ENCODE measurements at regions of chr3 and their contacts with region 1.

Region 1: DNA sequence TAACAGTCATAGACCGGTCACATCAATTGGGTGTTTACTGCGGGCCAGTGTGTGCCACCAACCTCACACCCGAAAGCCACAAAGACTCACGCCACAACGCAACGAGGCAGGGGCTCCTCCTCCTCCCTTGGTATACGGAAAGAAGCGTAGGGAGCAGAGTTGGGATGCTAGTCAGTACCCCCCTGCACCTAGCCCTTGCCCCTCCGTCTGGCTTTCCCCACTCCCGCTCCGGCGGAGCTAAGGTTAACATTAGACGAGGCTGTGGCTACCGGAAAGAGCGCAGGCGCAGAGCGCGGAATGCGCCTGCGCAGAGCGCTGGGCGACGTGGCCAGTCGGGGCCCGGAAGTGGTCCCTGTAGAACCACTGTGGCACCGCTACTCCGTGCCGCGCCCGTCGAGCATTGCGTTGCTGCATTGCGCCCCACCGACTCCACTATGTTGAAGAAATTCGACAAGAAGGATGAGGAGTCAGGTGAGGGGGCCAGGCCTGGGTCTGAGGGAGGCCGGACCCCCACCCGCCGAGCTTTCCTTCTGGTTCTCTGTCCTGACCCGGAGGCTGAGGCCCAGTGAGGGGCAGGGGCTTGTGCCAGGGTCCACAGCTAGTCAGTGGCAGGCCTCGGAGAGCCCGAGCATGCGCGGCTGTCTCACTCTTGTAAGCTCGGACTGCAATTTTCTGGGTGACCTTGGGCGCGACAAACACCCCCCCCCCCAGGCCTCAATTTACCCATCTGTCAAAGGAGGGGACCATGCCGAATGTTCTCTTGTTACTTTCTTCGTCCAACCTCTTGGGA is at the start of gene COPG1:
- DNase-seq: peak; percentile 92
- H3K4me3 ChIP-seq: peak within 1 kb of the TSS; percentile 92
- H3K27ac ChIP-seq: peak within 1 kb of the TSS; percentile 59
- H3K4me1 ChIP-seq: peaks cover 35% of the 10 kb centered on the region
- CTCF ChIP-seq: no peak
- total RNA-seq, gene COPG1: 91.9 and 135 TPM in 2 replicates

Region 2: DNA sequence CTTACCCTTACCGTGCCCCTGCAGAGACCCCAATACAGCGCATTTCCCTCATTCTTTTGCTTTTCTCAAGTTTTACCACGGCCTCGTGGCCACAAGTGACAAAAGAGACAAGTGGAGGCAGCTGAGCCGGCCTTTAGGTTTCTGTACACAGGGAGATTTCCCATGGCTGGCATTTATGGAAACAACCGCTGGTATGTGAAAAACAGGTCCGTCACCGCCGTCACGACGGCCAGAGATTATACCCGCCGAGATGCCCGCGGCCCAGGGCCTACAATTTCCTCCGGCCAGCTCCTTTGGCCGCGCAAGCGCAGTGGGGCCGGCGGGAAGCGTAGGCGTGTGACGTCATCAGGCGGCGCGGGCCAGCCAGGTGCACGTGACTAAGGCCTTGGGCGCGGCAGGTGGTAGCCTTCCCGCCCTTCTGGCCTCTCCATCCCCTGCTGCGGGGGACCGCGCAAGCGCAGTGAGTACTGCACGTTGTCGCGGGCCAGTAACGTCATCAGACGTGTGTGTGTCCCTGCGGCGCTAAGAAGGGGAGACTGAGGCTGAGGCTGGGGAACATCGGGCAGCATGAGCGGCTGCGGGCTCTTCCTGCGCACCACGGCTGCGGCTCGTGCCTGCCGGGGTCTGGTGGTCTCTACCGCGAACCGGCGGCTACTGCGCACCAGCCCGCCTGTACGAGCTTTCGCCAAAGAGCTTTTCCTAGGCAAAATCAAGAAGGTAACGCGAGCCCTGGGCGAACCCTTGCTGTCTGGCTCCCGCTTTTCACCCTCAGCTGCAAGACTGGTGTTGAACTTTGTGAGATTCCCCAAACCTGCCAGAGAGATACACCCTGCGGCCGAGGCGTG is 370.1 kb before region 1 on chr3 and contains the start of gene ACAD9:
- CTCF ChIA-PET with region 1: no interaction called
- POLR2A ChIA-PET with region 1: interaction called, 3 read pairs
- intact Hi-C with region 1: loop called (anchors 5 kb)
- DNase-seq: peak; percentile 99
- H3K4me3 ChIP-seq: peak within 1 kb of the TSS; percentile 90
- H3K27ac ChIP-seq: peak within 1 kb of the TSS; percentile 58
- H3K4me1 ChIP-seq: peaks cover 25% of the 10 kb centered on the region
- CTCF ChIP-seq: no peak
- total RNA-seq, gene ACAD9: 88.5 and 93.7 TPM in 2 replicates

Region 3: GRCh38 chr3:129026728-129027543 is 222.5 kb before region 1 on chr3:
- CTCF ChIA-PET with region 1: interaction called, 3 read pairs
- POLR2A ChIA-PET with region 1: interaction called, 10 read pairs
- intact Hi-C with region 1: loop called (anchors 2 kb)
- DNase-seq: peak; percentile 98
- H3K4me3 ChIP-seq: peak overlapping the region; percentile 66
- H3K27ac ChIP-seq: peak overlapping the region; percentile 44
- H3K4me1 ChIP-seq: peaks cover 38% of the 10 kb centered on the region
- CTCF ChIP-seq: peak; percentile 89

Region 4: GRCh38 chr3:129120254-129121004 is 129.0 kb before region 1 on chr3:
- CTCF ChIA-PET with region 1: interaction called, 4 read pairs
- POLR2A ChIA-PET with region 1: interaction called, 4 read pairs
- intact Hi-C with region 1: loop called (anchors 1 kb)
- DNase-seq: peak; percentile 97
- H3K4me3 ChIP-seq: peak overlapping the region; percentile 74
- H3K27ac ChIP-seq: peak overlapping the region; percentile 92
- H3K4me1 ChIP-seq: peaks cover 65% of the 10 kb centered on the region
- CTCF ChIP-seq: no peak

Region 5: DNA sequence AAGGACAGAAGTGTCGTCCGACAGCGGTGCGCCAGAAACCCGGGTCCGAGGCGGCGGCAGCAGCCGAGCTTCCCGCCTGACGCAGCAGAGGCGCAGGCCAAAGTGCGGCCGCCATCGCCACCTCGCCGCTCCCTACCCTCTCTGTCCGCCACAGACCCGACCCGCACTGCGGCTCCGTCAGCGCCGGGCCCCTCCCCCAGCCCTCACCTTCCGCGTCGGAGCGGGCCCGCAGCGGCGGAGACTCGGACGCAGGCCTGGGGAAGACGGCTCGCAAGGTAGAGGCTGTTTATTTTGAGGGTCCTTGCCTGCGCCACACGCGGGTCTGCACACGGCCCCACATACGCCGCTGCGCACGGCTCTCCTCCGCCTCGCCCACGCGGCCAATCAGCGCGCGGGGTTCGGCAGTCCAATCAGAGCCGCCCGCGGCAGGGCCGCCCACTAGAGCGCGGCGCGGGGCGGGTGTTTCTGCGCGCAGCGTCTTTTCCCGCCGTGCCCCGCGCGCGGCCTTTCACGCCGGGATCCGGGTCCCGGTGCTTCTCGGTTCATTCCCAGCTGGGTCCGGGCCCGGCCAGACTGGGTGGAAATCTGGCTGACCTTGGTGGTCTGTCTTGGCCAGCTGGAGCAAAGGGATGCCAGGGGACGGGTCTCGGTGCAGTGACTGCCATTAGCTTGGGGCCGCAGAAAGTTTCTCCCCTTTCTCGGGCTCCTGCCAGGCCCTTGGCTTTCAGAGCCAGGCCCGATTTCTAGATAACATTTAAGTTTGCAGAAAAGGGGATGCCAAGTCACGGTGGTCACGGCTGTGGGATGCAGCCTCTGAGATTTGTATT is 65.7 kb before region 1 on chr3 and contains the start of gene CNBP:
- CTCF ChIA-PET with region 1: interaction called, 4 read pairs
- POLR2A ChIA-PET with region 1: interaction called, 15 read pairs
- intact Hi-C with region 1: loop called (anchors 2 kb)
- DNase-seq: peak; percentile 96
- H3K4me3 ChIP-seq: peak within 1 kb of the TSS; percentile 83
- H3K27ac ChIP-seq: peak within 1 kb of the TSS; percentile 72
- H3K4me1 ChIP-seq: peaks cover 62% of the 10 kb centered on the region
- CTCF ChIP-seq: no peak
- total RNA-seq, gene CNBP: 336 and 350 TPM in 2 replicates

Region 6: GRCh38 chr3:129213238-129213637 is 36.2 kb before region 1 on chr3:
- CTCF ChIA-PET with region 1: no interaction called
- POLR2A ChIA-PET with region 1: no interaction called
- intact Hi-C with region 1: no loop called
- DNase-seq: no peak
- H3K4me3 ChIP-seq: no peak overlapping the region
- H3K27ac ChIP-seq: no peak overlapping the region
- H3K4me1 ChIP-seq: no peaks in the 10 kb centered on the region
- CTCF ChIP-seq: no peak

Region 7: DNA sequence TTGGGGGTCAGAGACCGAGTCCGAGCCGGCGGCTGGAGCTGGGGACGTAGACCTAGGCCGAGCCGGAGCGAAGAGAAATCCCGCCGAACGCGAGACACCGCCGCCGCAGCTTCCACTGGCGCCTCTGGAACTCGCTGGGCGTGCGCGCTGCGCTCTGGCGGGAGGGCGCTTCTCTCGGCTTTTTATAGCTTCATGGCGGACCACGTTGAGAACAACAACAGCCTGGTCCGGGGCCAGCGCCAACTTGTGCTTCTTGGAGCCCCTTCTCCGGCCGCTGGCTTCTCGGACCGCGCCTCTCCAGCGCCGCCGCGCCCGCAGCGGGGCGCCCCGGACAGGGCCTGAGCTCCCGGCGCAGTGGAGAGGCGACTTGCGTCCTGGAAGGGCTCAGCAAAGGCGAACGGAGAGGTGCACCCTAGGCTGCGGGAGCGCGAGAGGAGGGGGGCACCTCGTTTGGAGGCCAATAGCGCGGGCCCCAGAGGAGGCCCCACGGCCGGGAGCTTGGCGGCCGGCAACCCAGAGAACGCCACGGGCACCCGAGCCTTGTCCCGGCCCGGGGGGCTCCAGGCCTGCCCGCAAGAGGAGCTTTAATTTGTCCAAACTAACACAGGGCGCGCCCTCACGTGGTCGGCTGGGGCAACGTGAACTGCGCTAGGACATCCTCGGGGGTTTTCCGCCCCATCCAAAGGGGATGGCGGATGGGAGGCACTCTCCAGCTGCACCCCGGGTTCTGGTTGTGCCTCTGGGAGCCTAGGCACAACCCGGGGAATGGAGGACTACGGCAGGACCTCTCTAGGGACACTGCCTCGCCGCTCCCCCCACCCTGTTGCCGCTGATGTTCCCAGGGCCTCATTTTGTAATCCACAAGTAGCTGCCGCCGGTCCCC is 66.9 kb after region 1 on chr3:
- CTCF ChIA-PET with region 1: no interaction called
- POLR2A ChIA-PET with region 1: interaction called, 10 read pairs
- intact Hi-C with region 1: loop called (anchors 1 kb)
- DNase-seq: peak; percentile 86
- H3K4me3 ChIP-seq: peak overlapping the region; percentile 89
- H3K27ac ChIP-seq: peak overlapping the region; percentile 73
- H3K4me1 ChIP-seq: peaks cover 40% of the 10 kb centered on the region
- CTCF ChIP-seq: peak; percentile 91

Region 8: GRCh38 chr3:129330409-129330808 is 80.9 kb after region 1 on chr3:
- CTCF ChIA-PET with region 1: no interaction called
- POLR2A ChIA-PET with region 1: no interaction called
- intact Hi-C with region 1: no loop called
- DNase-seq: peak; percentile 52
- H3K4me3 ChIP-seq: no peak overlapping the region
- H3K27ac ChIP-seq: no peak overlapping the region
- H3K4me1 ChIP-seq: peaks cover 10% of the 10 kb centered on the region
- CTCF ChIP-seq: no peak

Region 9: GRCh38 chr3:129413687-129414506 is 164.4 kb after region 1 on chr3:
- CTCF ChIA-PET with region 1: no interaction called
- POLR2A ChIA-PET with region 1: no interaction called
- intact Hi-C with region 1: no loop called
- DNase-seq: no peak
- H3K4me3 ChIP-seq: no peak overlapping the region
- H3K27ac ChIP-seq: no peak overlapping the region
- H3K4me1 ChIP-seq: no peaks in the 10 kb centered on the region
- CTCF ChIP-seq: no peak